Activated naive CD4-positive, alpha-beta T cell treated with anti-CD3 and anti-CD28 coated beads, Interleukin-2, amount 10 ng/mL, durations not matched to agents 7 days and 5 days (primary cell): ENCODE measurements at regions of chr1 and their contacts with region 1.

Region 1: GRCh38 chr1:9629445-9630201 is 21.9 kb upstream of the PIK3CD start:
- DNase-seq: peak; percentile 90
- H3K4me3 Mint-ChIP-seq: peak overlapping the region; percentile 87
- H3K27ac Mint-ChIP-seq: peak overlapping the region; percentile 93
- H3K4me1 Mint-ChIP-seq: peaks cover 74% of the 10 kb centered on the region
- H3K27me3 Mint-ChIP-seq: peaks cover 11% of the 10 kb centered on the region

Region 2: GRCh38 chr1:9004700-9005394 is 624.8 kb before region 1 on chr1:
- CTCF ChIA-PET with region 1: no interaction called
- DNase-seq: peak; percentile 91
- H3K4me3 Mint-ChIP-seq: peak overlapping the region; percentile 50
- H3K27ac Mint-ChIP-seq: peak overlapping the region; percentile 75
- H3K4me1 Mint-ChIP-seq: peaks cover 13% of the 10 kb centered on the region
- H3K27me3 Mint-ChIP-seq: peaks cover 35% of the 10 kb centered on the region

Region 3: DNA sequence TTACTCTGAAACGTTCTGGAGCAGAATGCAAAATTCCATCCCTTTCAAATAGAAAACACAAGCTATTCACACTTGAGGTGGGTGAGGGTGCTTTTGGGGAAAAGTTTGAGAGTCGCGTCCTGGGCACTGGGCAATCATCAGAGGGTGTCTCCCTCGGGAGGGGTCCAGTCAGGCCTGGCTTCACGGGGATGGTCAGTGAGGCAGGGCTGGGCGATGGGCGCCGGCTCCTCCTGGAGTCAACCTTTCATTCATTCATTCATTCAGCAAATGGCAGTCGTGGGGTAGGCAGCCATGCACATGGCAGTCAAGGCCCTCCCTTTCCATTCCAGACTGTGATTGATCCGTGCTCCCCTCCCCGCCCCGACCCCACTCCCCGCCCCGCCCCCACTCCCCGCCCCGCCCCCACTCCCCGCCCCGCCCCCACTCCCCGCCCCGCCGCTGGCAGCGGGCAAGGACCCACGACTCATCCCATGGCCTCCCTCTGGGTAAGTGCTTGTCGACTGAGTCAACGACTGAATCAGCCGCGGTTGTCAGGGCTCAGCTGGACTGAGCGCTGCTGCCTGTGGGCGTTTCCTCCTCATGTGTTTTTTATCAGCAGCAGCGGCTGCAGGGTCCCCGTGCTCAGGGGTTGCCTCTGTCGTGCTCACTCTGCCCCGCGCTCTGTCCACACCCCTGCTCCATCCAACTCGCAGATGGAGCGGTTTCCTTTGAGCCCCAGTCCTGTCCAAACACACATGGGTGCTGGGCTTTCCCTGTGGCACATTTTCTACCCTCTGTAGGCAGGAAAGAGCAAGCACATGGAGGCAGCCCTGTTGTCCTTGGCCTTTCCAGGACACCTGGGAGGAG is 349.4 kb before region 1 on chr1:
- CTCF ChIA-PET with region 1: no interaction called
- DNase-seq: peak; percentile 50
- H3K4me3 Mint-ChIP-seq: no peak overlapping the region
- H3K27ac Mint-ChIP-seq: peak overlapping the region; percentile 25
- H3K4me1 Mint-ChIP-seq: peaks cover 72% of the 10 kb centered on the region
- H3K27me3 Mint-ChIP-seq: peaks cover 39% of the 10 kb centered on the region

Region 4: GRCh38 chr1:9596415-9597123 is 33.1 kb before region 1 on chr1:
- CTCF ChIA-PET with region 1: no interaction called
- DNase-seq: no peak
- H3K4me3 Mint-ChIP-seq: no peak overlapping the region
- H3K27ac Mint-ChIP-seq: no peak overlapping the region
- H3K4me1 Mint-ChIP-seq: peaks cover 21% of the 10 kb centered on the region
- H3K27me3 Mint-ChIP-seq: no peaks in the 10 kb centered on the region

Region 5: DNA sequence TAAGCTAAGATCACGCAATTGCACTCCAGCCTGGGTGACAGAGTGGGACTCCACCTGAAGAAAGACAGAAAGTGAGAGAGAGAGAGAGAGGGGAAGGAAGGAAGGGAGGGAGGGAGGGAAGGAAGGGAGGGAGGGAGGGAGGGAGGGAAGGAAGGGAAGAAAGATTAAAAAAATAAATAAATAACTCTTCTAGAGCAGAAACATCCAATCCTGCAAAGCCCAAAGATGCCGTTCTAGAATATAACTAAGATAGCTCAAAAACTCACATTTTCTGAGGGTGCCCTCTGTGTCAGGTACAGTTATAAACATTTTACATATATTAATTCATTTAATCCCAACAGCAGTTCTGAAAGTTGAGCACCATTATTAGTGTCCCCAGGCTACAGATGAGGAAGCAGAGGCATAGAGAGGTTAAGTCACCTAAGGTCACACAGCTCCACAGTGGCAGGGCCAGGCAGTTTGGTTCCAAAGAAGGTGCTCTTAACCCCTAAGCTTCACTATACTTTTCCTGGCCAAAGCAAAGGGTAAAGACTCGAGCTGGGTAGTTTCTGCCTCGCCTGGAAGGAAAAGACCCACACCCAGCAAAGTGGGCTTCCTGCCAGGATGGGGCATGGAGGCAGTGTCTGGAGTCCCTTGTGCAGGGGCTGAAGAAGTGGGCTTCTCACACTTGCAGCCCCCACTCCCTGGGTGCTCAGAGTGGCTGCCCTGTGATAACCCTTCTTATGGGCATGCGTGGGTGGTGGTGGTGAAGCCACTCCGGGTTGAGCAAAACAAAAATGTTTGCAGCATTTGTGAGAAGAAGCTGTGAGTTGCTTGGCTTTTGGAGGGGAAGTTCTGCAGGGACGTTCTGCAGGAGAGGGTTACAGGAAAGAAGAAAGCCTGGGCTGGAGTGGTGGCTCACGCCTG is 14.0 kb after region 1 on chr1:
- CTCF ChIA-PET with region 1: interaction called, 17 read pairs
- DNase-seq: no peak
- H3K4me3 Mint-ChIP-seq: no peak overlapping the region
- H3K27ac Mint-ChIP-seq: peak overlapping the region; percentile 77
- H3K4me1 Mint-ChIP-seq: peaks cover 68% of the 10 kb centered on the region
- H3K27me3 Mint-ChIP-seq: no peaks in the 10 kb centered on the region

Region 6: DNA sequence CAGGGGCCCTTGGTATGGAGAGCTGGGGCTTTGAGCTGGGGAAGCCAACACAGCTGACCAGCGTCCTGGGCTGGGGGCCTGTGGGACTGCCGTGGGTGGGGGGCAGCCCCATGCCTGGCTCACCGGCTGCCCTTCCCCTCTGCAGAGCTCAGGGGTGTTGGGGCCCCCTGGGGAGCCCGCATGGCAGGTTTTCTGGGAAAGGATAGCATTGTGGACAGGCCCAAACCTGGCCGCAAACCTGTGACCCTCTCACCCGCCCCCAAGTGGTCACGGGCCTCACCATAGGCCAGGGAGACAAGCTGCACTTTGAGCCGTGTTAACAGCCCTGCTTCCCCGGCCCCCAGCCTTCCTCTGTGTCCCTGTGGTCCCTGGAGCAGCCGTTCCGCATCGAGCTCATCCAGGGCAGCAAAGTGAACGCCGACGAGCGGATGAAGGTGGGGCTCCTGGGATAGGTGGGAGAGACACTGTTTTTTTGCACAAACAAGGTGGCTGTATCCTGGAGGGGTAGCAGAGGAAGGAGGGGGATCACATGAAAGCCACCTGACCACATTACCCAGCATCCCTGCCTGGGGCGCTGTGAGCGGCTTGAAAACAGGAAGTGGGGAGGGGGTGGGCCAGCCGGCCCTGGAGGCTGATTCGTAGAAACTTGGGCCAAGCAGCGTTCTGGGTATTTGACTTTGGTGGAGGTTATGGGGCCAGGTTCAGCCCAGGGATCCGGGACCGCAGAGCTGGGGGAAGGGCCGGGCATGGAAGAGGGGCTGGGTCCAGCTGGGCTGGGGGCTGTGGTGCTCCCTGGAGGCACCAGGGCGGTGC is 87.8 kb after region 1 on chr1:
- CTCF ChIA-PET with region 1: interaction called, 36 read pairs
- DNase-seq: peak; percentile 97
- H3K4me3 Mint-ChIP-seq: peak overlapping the region; percentile 98
- H3K27ac Mint-ChIP-seq: peak overlapping the region; percentile 95
- H3K4me1 Mint-ChIP-seq: peaks cover 84% of the 10 kb centered on the region
- H3K27me3 Mint-ChIP-seq: peaks cover 6% of the 10 kb centered on the region

Region 7: DNA sequence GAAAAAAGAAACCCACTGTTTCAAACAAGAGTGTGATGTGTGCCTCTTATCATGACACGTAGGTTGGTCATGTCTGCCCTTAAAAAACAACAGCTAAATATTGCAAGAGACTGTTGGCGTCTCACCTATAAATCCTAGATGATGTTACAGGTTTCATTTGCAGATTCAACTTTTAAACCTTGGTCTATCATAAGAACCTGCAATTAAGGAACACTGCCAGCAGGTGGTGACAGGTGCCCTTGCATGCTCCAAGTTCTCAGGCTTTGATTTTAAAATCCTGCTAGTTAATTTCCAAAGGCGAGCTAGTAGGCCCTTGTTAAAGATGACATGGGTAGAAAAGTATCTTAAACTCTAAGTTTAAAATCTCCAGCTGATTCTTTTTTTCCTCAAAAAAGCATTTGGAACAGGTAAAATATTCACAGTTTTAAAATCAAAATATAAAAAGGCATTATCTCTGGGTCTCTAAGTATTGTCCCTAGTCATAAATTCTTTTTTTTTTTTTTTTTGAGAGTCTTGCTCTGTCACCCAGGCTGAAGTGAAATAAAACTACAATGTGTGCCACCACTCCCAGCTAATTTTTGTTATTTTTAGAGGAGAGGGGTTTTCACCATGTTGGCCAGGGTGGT is 155.0 kb after region 1 on chr1:
- CTCF ChIA-PET with region 1: interaction called, 10 read pairs
- DNase-seq: peak; percentile 81
- H3K4me3 Mint-ChIP-seq: no peak overlapping the region
- H3K27ac Mint-ChIP-seq: no peak overlapping the region
- H3K4me1 Mint-ChIP-seq: peaks cover 59% of the 10 kb centered on the region
- H3K27me3 Mint-ChIP-seq: no peaks in the 10 kb centered on the region